ENCODE measurements at regions of chr16 and their contacts with region 1.

Region 1: GRCh38 chr16:46711106-46712058 is 21.9 kb downstream of the ORC6 start:
- H3K4me3 Mint-ChIP-seq: no peak overlapping the region
- H3K27ac Mint-ChIP-seq: peak overlapping the region; percentile 72
- H3K4me1 Mint-ChIP-seq: peaks cover 59% of the 10 kb centered on the region
- H3K27me3 Mint-ChIP-seq: no peaks in the 10 kb centered on the region

Region 2: GRCh38 chr16:46573008-46573833 is 138.2 kb before region 1 on chr16:
- intact Hi-C with region 1: no loop called
- H3K4me3 Mint-ChIP-seq: peak overlapping the region; percentile 39
- H3K27ac Mint-ChIP-seq: no peak overlapping the region
- H3K4me1 Mint-ChIP-seq: no peaks in the 10 kb centered on the region
- H3K27me3 Mint-ChIP-seq: peaks cover 7% of the 10 kb centered on the region

Region 3: GRCh38 chr16:46743238-46743719 is 31.9 kb after region 1 on chr16:
- intact Hi-C with region 1: loop called (anchors 2 kb)
- H3K4me3 Mint-ChIP-seq: peak overlapping the region; percentile 27
- H3K27ac Mint-ChIP-seq: peak overlapping the region; percentile 97
- H3K4me1 Mint-ChIP-seq: peaks cover 25% of the 10 kb centered on the region
- H3K27me3 Mint-ChIP-seq: no peaks in the 10 kb centered on the region

Measured in dendritic cell treated with granulocyte-macrophage colony-stimulating factor and Interleukin-4, amounts not matched to agents 40 ng/mL and 50 ng/mL, for 4 days (primary cell).